OCI-LY7 (cell line): ENCODE measurements at regions of chr7 and their contacts with region 1.

Region 1: DNA sequence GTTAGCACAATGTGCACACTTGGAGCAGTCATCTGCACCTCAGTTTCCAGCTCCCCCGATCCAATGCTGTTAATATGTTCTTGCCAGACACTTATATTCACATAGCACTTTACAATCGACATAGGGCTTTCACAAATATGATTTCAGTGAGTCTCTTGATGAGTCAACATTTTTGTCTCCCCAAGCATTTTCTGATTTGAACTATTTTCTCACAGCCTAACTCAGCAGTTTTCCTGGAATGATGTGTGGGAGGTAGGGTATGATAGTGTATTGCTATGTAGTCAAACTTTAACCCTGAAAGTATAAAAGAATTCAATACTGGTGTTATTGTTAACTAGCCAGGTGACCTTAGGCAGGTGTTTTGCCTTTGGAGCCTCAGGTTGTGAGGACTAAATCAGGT is 82.5 kb upstream of the LRGUK start:
- DNase-seq: no peak
- H3K4me3 ChIP-seq: no peak overlapping the region
- H3K27ac ChIP-seq: peak overlapping the region; percentile 89
- H3K4me1 ChIP-seq: peaks cover 74% of the 10 kb centered on the region
- CTCF ChIP-seq: no peak

Region 2: GRCh38 chr7:133919810-133920209 is 124.9 kb before region 1 on chr7:
- CTCF ChIA-PET with region 1: no interaction called
- POLR2A ChIA-PET with region 1: no interaction called
- intact Hi-C with region 1: no loop called
- DNase-seq: no peak
- H3K4me3 ChIP-seq: no peak overlapping the region
- H3K27ac ChIP-seq: no peak overlapping the region
- H3K4me1 ChIP-seq: no peaks in the 10 kb centered on the region
- CTCF ChIP-seq: no peak

Region 3: GRCh38 chr7:134031835-134032617 is 12.7 kb before region 1 on chr7:
- CTCF ChIA-PET with region 1: no interaction called
- POLR2A ChIA-PET with region 1: interaction called, 16 read pairs
- intact Hi-C with region 1: no loop called
- DNase-seq: no peak
- H3K4me3 ChIP-seq: no peak overlapping the region
- H3K27ac ChIP-seq: no peak overlapping the region
- H3K4me1 ChIP-seq: no peaks in the 10 kb centered on the region
- CTCF ChIP-seq: peak; percentile 44; the same call in 1 of the 2 replicates

Region 4: DNA sequence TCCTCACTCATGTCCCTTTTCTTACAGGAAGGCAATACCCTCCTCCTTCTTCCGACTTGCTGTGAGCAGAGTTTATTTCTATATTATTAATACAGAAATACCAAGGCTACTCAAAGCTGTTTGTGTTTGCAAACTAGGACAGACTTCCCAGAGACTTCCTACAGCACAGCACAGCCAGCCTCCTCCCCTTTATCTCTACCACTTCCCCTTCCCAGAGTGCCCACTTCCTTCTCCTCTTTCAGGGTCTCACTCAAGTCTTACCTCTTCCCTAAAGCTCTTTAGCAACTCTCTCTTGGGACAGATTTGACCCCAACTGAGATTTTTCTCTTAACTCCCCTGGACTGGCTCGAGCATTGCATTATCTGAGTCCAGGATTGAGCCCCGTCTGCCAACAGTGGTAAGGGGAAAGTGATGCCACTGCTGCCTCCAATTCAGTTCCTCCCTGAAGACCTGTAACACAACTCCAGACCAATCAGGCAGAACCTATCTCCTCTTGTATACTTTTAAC is 77.0 kb after region 1 on chr7:
- CTCF ChIA-PET with region 1: no interaction called
- POLR2A ChIA-PET with region 1: no interaction called
- intact Hi-C with region 1: loop called (anchors 5 kb)
- DNase-seq: no peak
- H3K4me3 ChIP-seq: no peak overlapping the region
- H3K27ac ChIP-seq: no peak overlapping the region
- H3K4me1 ChIP-seq: no peaks in the 10 kb centered on the region
- CTCF ChIP-seq: no peak

Region 5: DNA sequence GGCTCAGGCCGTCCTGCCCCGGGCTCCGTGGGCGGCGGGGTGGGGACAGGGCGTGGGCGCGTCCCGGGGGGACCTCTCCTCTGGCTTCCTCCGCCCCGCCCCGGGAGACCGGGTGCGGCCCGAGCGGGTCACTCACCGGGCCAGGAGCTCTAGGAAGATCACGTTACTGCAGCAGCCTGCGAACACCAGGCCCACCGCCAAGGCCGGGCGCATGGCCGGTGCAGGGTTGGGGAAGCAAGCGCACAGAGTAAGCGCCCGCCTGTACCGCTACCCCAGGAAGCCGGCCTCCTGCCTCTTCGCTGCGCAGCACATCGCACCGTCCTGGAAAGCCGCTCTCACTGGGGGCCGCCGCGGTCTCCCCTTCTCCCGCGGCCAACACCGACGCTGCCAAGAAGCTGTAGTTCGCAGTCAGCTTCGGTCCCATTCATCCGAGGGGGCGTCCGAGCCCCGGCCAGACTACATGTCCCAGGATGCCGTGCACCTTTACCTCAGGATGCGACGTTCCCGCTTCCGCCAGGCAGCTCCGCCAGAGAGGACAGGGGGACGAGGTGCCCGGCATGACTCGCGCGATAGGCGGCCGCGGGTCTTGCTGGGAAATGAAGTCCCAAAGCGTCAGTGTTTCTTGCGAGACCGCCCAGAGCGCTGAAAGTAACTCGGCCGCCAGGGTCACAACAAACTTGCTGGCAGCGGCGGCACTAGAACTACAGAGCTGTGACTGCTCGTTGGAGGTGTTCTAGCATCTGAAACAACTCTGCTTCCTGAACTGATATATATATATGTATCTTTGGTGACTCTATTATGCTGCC is 272.1 kb after region 1 on chr7 and contains the start of gene SLC35B4:
- CTCF ChIA-PET with region 1: no interaction called
- POLR2A ChIA-PET with region 1: interaction called, 5 read pairs
- intact Hi-C with region 1: loop called (anchors 5 kb)
- DNase-seq: peak; percentile 97
- H3K4me3 ChIP-seq: peak within 1 kb of the TSS; percentile 99
- H3K27ac ChIP-seq: peak within 1 kb of the TSS; percentile 9
- H3K4me1 ChIP-seq: peaks cover 14% of the 10 kb centered on the region
- CTCF ChIP-seq: peak; percentile 35
- total RNA-seq, gene SLC35B4: 36.5 and 38.1 TPM in 2 replicates

Region 6: GRCh38 chr7:134458806-134459698 is 414.4 kb after region 1 on chr7 and contains the start of gene AKR1B1:
- CTCF ChIA-PET with region 1: no interaction called
- POLR2A ChIA-PET with region 1: no interaction called
- intact Hi-C with region 1: loop called (anchors 10 kb)
- DNase-seq: peak; percentile 96
- H3K4me3 ChIP-seq: peak within 1 kb of the TSS; percentile 96
- H3K27ac ChIP-seq: peak within 1 kb of the TSS; percentile 57
- H3K4me1 ChIP-seq: peaks cover 29% of the 10 kb centered on the region
- CTCF ChIP-seq: peak; percentile 77
- total RNA-seq, gene AKR1B1: 66.4 and 75.7 TPM in 2 replicates